Sciatic nerve (tissue), 2 donors: ENCODE measurements at regions of chr6 and their contacts with region 1.

Region 1: GRCh38 chr6:108760126-108761050 is 87.8 kb upstream of the ARMC2 start:
- DNase-seq: no peak
- ATAC-seq: peak; percentile 61

Region 2: DNA sequence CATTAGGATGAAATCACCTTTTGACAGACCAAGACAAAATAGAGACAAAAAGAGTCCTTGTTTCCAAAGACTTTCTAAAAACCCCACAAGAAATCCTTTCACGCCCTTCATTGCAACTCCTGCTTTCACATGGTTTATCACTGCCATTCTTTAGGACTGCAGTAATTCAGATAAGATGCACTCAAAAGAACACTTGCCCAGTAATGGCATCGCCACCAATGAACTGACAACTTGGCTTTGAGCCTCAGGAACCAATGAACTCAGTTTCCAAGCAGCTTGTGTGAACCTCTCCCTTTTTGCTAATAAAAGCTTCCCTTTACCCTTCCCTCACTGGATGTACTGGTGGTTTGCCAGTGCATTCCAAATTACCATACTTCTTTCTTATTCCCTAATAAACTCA is 707.7 kb before region 1 on chr6:
- intact Hi-C with region 1: loop called (anchors 5 kb)
- DNase-seq: no peak
- ATAC-seq: no peak